ENCODE measurements at regions of chr3 and their contacts with region 1.

Region 1: DNA sequence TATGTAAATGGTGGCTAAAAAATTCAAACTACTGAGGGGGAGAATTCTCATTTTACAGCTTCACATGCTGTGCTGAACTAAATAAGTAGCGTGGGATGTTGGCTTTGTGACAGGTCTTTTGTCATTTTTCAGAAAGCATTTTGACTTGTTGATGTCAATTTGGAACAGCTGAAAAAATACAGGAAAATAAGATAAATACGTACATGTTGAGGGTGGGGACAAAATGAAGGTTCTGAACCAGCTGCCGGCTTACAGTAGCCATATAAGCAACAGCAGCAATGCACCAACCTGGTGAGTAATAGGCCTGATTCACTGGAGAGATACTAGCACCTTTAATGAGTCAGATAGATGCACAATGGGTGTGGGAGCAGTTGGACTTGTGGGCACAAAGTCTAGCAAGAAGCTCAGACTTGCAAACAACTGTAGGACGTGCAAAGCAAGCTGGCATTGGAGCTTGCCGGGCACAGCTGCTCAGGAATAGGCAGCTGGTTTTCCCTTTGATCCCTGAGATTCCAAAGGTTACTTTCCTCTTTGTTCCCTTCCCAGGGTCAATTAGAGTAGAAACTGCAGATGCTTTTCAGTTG is 12.9 kb downstream of the B3GNT5 start:
- DNase-seq: no peak
- H3K4me3 Mint-ChIP-seq: peak overlapping the region; percentile 43
- H3K27ac Mint-ChIP-seq: no peak overlapping the region
- H3K4me1 Mint-ChIP-seq: no peaks in the 10 kb centered on the region
- H3K27me3 Mint-ChIP-seq: no peaks in the 10 kb centered on the region

Region 2: DNA sequence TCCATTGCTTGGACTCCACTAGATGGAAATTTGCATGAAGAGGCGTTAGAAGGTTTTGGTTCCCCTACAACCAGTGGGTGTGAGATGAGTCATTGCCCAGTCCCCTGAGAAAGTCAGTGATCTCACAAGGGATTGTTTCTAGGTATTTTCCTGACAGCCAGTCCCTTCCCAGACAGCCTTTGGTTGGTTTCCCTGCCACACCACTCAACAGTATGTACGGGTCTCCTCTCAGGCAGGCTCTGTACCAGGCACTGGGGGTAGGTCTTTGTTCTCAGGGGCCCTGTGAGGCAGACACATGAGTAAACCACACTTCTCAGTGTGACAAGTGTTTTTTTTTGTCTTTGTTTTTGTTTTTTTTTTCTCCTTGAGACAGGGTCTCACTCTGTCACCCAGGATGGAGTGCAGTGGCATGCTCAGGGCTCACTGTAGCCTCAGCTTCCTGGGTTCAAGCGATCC is 107.3 kb before region 1 on chr3:
- intact Hi-C with region 1: loop called (anchors 1 kb)
- DNase-seq: no peak
- H3K4me3 Mint-ChIP-seq: no peak overlapping the region
- H3K27ac Mint-ChIP-seq: peak overlapping the region; percentile 76
- H3K4me1 Mint-ChIP-seq: peaks cover 32% of the 10 kb centered on the region
- H3K27me3 Mint-ChIP-seq: no peaks in the 10 kb centered on the region

Region 3: DNA sequence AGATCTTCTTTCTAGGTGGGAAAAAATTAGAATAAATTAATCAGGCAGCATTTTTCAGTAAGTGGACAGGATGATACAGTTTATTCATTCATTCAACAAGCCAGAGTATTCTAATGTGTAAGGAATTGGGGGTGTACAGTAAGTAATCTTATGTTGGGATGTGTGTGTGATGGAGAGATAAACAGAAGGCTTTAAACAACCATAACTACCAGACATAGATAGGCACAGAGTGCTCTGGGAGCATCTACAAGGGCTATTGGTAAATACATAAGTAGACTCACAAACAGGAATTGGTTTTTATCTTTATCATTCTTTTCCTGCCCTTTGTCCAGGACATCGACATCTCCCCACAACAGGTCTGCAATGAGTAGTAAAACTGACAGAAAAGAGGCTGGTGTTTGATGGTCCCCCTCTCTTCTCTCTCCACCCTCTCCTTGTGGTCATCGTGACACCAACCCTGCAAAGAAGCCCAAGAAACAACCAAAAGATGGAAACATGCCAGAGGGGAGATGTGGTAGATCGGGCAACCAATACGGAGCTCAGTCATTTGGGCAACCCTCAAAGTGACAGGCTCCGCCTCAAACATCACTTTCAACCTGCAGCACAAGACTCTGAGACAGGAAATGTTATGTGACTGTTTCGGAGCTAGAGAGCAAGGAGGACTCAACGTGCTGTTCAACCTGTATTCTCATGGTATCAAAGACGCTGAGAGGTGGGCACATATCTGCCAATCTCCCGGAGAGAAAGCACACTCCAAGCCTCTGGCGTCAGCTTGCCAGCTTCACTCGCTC is 41.6 kb before region 1 on chr3:
- intact Hi-C with region 1: loop called (anchors 1 kb)
- DNase-seq: peak; percentile 52
- H3K4me3 Mint-ChIP-seq: peak overlapping the region; percentile 49
- H3K27ac Mint-ChIP-seq: peak overlapping the region; percentile 82
- H3K4me1 Mint-ChIP-seq: peaks cover 51% of the 10 kb centered on the region
- H3K27me3 Mint-ChIP-seq: no peaks in the 10 kb centered on the region

Region 4: GRCh38 chr3:183285828-183286457 is 20.0 kb after region 1 on chr3:
- intact Hi-C with region 1: loop called (anchors 1 kb)
- DNase-seq: peak; percentile 88
- H3K4me3 Mint-ChIP-seq: peak overlapping the region; percentile 57
- H3K27ac Mint-ChIP-seq: peak overlapping the region; percentile 95
- H3K4me1 Mint-ChIP-seq: peaks cover 35% of the 10 kb centered on the region
- H3K27me3 Mint-ChIP-seq: no peaks in the 10 kb centered on the region

Region 5: GRCh38 chr3:183328823-183329222 is 62.9 kb after region 1 on chr3:
- intact Hi-C with region 1: no loop called
- DNase-seq: no peak
- H3K4me3 Mint-ChIP-seq: no peak overlapping the region
- H3K27ac Mint-ChIP-seq: no peak overlapping the region
- H3K4me1 Mint-ChIP-seq: peaks cover 20% of the 10 kb centered on the region
- H3K27me3 Mint-ChIP-seq: no peaks in the 10 kb centered on the region

Region 6: DNA sequence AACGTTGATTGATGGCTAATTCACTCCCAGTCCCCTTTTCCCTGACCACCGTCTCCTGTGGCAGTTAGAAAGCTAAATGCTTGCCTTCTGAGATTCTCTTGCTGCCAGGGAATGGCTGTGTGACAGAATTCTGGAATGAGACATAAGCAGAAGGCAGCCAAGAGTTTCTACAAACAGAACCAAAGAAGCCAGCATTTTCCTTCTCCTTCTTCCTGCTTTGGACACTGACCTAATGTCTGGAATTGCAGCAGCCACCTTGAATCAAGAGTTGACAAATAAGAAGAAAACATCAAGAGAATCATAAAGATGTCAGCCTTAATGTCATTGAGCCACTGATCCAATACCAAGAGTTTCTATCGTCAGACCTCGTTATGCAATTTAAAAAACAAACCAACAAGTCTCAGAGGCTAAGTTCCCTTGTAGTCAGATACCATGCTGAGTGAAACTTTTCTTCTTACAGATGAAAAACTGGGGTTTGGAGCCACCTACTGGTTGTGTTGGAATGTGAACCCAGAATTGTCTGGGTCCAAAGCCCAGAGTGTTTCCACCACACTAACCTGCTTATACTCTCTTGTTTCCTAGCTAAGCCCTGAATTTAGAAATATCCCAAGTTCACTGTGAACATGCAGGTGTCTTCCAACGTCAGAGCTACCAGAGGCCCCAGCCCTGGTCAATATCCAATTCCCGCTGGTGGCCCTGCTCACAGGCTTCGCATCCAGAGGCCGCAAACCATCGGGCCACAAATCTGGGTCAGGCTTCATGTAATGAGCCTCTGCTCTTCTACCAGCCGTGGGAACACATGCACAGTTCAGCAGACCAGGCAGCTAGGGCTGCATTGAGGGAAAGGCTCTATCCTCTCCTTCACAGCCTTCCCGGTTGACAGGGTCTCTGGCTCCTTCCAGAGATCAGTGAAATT is 120.0 kb after region 1 on chr3:
- intact Hi-C with region 1: loop called (anchors 1 kb)
- DNase-seq: peak; percentile 33
- H3K4me3 Mint-ChIP-seq: no peak overlapping the region
- H3K27ac Mint-ChIP-seq: no peak overlapping the region
- H3K4me1 Mint-ChIP-seq: peaks cover 21% of the 10 kb centered on the region
- H3K27me3 Mint-ChIP-seq: no peaks in the 10 kb centered on the region

Measured in activated T-helper 2 cell treated with anti-CD3 and anti-CD28 coated beads, Interferon-gamma antibody, Interleukin-2, Interleukin-4, amounts not matched to agents 10 μg/mL and 5 μg/mL and 100 μg/mL, durations not matched to agents 14 hours and 24 hours and 36 hours (primary cell).